Dorsolateral prefrontal cortex (tissue), 120 donors: ENCODE measurements at regions of chr12 and their contacts with region 1.

Region 1: DNA sequence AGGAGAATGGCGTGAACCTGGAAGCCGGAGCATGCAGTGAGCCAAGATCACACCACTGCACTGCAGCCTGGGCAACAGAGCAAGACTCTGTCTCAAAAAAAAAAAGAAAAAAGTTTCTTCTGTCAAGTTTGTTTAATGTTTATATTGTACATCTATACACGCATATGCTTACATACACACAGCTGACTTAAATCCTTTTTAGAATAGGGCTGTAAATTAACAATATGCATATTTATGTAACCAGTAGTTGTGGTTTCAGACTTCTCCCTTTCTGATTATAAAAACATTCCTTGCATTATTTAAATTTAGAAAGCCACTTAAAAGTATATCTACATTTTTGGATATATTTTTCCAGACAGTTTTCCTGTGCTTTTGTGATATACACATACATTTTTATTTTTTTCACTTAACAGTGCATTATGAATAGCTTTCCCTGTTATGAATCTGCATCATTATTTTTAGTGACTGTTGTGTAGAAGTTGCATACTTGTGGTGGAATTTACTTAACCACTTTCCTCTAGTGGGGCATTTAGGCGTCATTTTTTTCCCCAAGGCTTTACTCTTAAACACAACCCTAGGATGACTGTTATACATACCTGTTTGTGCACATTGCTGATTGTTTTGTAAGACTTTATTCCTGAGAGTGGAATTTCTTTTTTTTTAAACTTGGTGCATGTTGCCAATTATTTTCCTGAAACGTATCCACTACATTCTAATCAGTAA is 29.4 kb downstream of the POLR3B start:
- DNase-seq: no peak
- H3K4me3 ChIP-seq: no peak overlapping the region
- H3K27ac ChIP-seq: no peak overlapping the region
- H3K27me3 ChIP-seq: no peaks in the 10 kb centered on the region
- CTCF ChIP-seq: no peak

Region 2: GRCh38 chr12:106760184-106760531 is 373.2 kb after region 1 on chr12:
- intact Hi-C with region 1: loop called in 1 of 2 experiments (anchors 10 kb)
- DNase-seq: peak in 2 of 10 donors; percentile 43 to 49
- H3K4me3 ChIP-seq: peak overlapping the region in 5 of 59 donors; percentile 4 to 32 (median 17)
- H3K27ac ChIP-seq: peak overlapping the region in 58 of 59 donors; percentile 12 to 92 (median 80)
- H3K27me3 ChIP-seq: no peaks in the 10 kb centered on the region
- CTCF ChIP-seq: no peak

Region 3: GRCh38 chr12:106841510-106842302 is 454.7 kb after region 1 on chr12:
- intact Hi-C with region 1: loop called in 1 of 2 experiments (anchors 5 kb)
- DNase-seq: peak in 4 of 10 donors; percentile 15 to 49 (median 26)
- H3K4me3 ChIP-seq: peak overlapping the region in 1 of 59 donors; percentile 19
- H3K27ac ChIP-seq: peak overlapping the region in 4 of 59 donors; percentile 3 to 19 (median 10)
- H3K27me3 ChIP-seq: no peaks in the 10 kb centered on the region
- CTCF ChIP-seq: peak; percentile 31 to 87 (median 74)

Region 4: DNA sequence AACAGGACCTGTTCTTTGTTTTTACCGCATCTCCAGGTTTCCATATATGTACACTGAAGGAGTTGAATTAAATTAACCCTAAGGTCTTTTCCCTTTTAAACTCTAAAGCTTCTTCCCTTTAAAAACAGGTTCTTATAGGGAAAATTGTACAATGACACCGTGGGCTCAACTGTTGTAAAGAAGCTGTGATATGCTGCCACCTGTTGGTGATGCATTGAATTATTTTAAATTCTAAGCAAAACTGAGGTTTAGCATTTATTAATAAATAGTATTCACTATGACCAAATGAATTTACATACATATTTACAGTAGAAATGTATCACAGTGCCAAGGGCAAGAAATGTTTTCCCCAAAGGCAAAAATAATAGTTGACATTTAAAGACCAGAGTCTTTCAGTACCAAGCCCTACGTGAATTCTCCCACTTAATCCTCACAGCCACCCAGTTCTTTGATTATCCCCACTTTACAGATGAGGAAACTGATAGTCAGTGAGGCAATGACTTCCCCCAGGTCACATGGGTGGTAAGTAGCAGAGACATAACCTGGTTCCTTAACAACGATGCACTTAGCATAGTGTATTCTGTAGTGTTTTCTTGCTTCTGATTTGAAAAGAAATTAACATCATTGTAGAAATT is 533.1 kb after region 1 on chr12:
- intact Hi-C with region 1: loop called (anchors 2 to 5 kb)
- DNase-seq: no peak
- H3K4me3 ChIP-seq: no peak overlapping the region
- H3K27ac ChIP-seq: no peak overlapping the region
- H3K27me3 ChIP-seq: peaks cover 0 to 6% (median 0%) of the 10 kb centered on the region in 45 donors
- CTCF ChIP-seq: peak; percentile 71 to 98 (median 86)

Region 5: DNA sequence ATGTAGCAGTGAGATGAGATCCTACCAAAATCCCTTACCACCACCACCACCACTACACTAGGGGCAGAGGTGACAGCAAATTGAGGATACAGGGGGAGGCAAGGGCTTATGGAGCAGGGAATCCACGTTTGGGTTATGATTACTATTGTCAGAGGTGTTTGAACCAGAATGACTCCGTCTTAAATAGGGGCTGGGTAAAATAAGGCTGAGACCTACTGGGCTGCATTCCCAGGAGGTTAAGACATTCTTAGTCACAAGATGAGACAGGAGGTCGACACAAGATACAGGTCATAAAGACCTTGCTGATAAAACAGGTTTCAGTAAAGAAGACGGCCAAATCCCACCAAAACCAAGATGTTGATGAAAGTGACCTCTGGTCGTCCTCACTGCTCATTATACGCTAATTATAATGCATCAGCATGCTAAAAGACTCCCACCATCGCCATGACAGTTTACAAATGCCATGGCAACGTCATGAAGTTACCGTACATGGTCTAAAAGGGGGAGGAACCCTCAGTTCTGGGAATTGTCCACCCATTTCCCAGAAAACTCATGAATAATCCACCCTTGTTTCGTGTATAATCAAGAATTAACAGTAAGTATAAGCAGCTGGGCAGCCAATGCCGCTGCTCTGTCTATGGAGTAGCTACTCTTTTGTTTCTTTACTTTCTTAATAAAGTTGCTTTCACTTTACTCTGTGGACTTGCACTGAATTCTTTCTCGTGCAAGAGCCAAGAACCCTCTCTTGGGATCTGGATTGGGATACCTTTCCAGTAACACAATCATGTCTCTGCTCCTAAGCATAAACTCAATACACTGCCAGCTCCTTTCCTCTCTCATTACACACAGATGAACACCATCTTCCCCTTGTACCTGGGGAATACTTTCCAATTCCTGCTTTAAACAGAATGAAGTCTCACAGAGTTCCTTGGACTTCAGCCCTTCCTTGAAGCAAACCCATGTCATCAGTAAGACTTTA is 723.1 kb after region 1 on chr12:
- intact Hi-C with region 1: loop called in 1 of 2 experiments (anchors 10 kb)
- DNase-seq: no peak
- H3K4me3 ChIP-seq: peak overlapping the region in 18 of 59 donors; percentile 1 to 47 (median 26)
- H3K27ac ChIP-seq: no peak overlapping the region
- H3K27me3 ChIP-seq: peaks cover 0 to 13% (median 0%) of the 10 kb centered on the region in 45 donors
- CTCF ChIP-seq: no peak